HepG2 (cell line): ENCODE measurements at regions of chr5 and their contacts with region 1.

Region 1: GRCh38 chr5:41815663-41816229 is 54.5 kb downstream of the OXCT1 start:
- DNase-seq: no peak
- ATAC-seq: no peak
- H3K4me3 ChIP-seq: no peak overlapping the region
- H3K27ac ChIP-seq: no peak overlapping the region
- H3K4me1 ChIP-seq: no peaks in the 10 kb centered on the region
- H3K27me3 ChIP-seq: no peaks in the 10 kb centered on the region
- CTCF ChIP-seq: no peak
- EP300 ChIP-seq: no peak
- POLR2A ChIP-seq: no peak
- RAD21 ChIP-seq: no peak

Region 2: DNA sequence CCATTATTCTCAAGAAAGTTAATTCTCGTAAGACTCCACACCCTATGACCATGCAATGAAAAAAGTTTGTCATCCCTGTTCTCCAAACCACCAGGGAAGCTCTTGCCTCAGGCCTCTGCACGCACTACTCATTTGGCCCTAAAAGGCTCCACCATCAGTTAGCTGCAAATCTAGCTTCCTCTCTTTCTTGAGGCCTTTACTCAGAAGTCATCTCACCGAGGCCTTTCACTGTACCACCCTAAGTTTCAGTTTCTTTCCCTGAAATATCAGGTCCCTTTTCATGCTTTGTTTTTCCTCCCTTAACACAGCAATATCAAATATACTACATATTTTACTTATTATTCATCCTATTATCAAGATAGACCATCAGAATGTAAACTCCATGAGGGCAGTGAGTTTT is 15.4 kb after region 1 on chr5:
- CTCF ChIA-PET with region 1: no interaction called
- POLR2A ChIA-PET with region 1: no interaction called
- in situ Hi-C with region 1: no loop called
- intact Hi-C with region 1: loop called (anchors 1 kb)
- DNase-seq: no peak
- ATAC-seq: no peak
- H3K4me3 ChIP-seq: no peak overlapping the region
- H3K27ac ChIP-seq: no peak overlapping the region
- H3K4me1 ChIP-seq: no peaks in the 10 kb centered on the region
- H3K27me3 ChIP-seq: no peaks in the 10 kb centered on the region; a peak in 1 of 5 replicates
- CTCF ChIP-seq: no peak
- EP300 ChIP-seq: no peak
- POLR2A ChIP-seq: no peak
- RAD21 ChIP-seq: no peak

Region 3: DNA sequence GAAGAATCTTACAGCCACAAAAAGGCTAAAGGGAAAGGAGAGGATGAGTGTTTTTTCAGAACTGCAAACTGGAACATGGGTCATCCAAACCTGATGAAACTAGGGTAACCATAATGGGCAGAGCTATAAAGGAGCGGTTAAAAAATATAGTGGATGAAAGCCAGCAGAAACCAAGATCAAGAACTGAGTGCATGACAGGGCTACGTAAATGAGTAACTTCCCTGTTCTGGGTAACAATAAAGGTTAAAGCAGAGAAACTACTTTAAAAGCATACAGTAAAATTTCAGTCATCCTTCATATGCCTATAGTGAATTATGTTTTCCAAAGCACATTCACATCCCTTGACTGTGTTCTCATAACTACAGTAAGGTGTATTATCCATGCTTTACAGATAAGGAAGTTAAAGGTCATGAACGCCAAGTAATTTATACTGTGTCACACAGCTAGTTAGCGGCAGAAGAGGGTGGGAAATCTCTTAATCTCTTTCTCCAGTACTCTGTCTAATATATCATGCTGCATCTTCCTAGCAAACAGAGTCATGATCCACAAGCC is 559.1 kb after region 1 on chr5:
- CTCF ChIA-PET with region 1: no interaction called
- POLR2A ChIA-PET with region 1: no interaction called
- in situ Hi-C with region 1: no loop called
- intact Hi-C with region 1: no loop called
- DNase-seq: no peak
- ATAC-seq: no peak
- H3K4me3 ChIP-seq: no peak overlapping the region
- H3K27ac ChIP-seq: no peak overlapping the region
- H3K4me1 ChIP-seq: no peaks in the 10 kb centered on the region
- H3K27me3 ChIP-seq: no peaks in the 10 kb centered on the region; a peak in 1 of 5 replicates
- CTCF ChIP-seq: no peak
- EP300 ChIP-seq: no peak
- POLR2A ChIP-seq: no peak
- RAD21 ChIP-seq: no peak